ENCODE measurements at regions of chr1 and their contacts with region 1.

Region 1: GRCh38 chr1:170397061-170397460 is 134.9 kb upstream of the GORAB start:
- DNase-seq: no peak
- ATAC-seq: peak; percentile 38

Region 2: GRCh38 chr1:169941982-169942830 is 454.9 kb before region 1 on chr1:
- intact Hi-C with region 1: no loop called
- DNase-seq: no peak
- ATAC-seq: no peak

Region 3: GRCh38 chr1:170424346-170424745 is 27.3 kb after region 1 on chr1:
- intact Hi-C with region 1: loop called (anchors 2 kb)
- DNase-seq: no peak
- ATAC-seq: no peak

Region 4: GRCh38 chr1:170436928-170437327 is 39.9 kb after region 1 on chr1:
- intact Hi-C with region 1: no loop called
- DNase-seq: no peak
- ATAC-seq: no peak

Measured in left ventricle myocardium superior (tissue), 1 donor.